HAP-1 (cell line): ENCODE measurements at regions of chr4 and their contacts with region 1.

Region 1: GRCh38 chr4:72326692-72327632 is 242.1 kb downstream of the ADAMTS3 start:
- DNase-seq: peak in 1 of 2 experiments; percentile 58
- H3K4me3 ChIP-seq: no peak overlapping the region
- H3K4me1 ChIP-seq: peaks cover 4% of the 10 kb centered on the region
- H3K27me3 ChIP-seq: no peaks in the 10 kb centered on the region

Region 2: DNA sequence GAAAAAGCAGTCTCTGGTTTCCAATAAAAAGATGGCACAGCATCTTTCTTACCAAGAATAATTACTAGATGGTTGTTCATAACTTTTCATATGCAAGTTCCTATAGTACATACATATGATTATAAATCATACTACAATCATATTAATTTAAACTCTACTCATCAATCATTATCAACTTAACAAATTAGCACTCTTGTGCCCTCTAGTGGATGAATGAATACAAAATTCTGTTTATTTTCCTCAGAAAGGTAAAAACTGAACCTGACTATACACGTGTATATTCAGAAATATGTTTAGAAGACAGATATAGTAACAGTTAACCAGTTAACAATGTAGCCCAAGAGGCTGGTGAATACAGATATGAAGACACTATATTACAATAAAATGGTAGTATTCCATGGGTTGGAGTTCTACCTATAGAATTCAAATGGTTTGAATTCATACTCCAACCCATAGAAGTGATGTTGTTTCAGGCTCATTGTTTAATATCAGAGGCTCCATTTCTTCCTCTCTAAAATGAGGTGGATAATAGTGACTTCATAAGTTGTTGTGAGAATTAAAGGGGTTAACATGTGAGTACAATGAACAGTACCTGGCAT is 142.0 kb after region 1 on chr4:
- in situ Hi-C with region 1: loop called (anchors 25 kb)
- DNase-seq: peak in 1 of 2 experiments; percentile 21
- H3K4me3 ChIP-seq: no peak overlapping the region
- H3K4me1 ChIP-seq: no peaks in the 10 kb centered on the region
- H3K27me3 ChIP-seq: no peaks in the 10 kb centered on the region

Region 3: GRCh38 chr4:72564184-72564583 is 237.2 kb after region 1 on chr4:
- in situ Hi-C with region 1: no loop called
- DNase-seq: no peak
- H3K4me3 ChIP-seq: no peak overlapping the region
- H3K4me1 ChIP-seq: peaks cover 14% of the 10 kb centered on the region
- H3K27me3 ChIP-seq: no peaks in the 10 kb centered on the region